ENCODE measurements at regions of chr7 and their contacts with region 1.

Region 1: GRCh38 chr7:371119-371778 is 81.3 kb downstream of the FOXL3 start:
- DNase-seq: peak; percentile 59 to 84
- H3K4me3 ChIP-seq: no peak overlapping the region
- H3K4me3 Mint-ChIP-seq: peak overlapping the region; percentile 16
- H3K27ac Mint-ChIP-seq: peak overlapping the region; percentile 99
- H3K4me1 ChIP-seq: peaks cover 72% of the 10 kb centered on the region
- H3K4me1 Mint-ChIP-seq: peaks cover 43% of the 10 kb centered on the region
- H3K27me3 ChIP-seq: no peaks in the 10 kb centered on the region
- H3K27me3 Mint-ChIP-seq: no peaks in the 10 kb centered on the region
- CTCF ChIP-seq: no peak

Region 2: DNA sequence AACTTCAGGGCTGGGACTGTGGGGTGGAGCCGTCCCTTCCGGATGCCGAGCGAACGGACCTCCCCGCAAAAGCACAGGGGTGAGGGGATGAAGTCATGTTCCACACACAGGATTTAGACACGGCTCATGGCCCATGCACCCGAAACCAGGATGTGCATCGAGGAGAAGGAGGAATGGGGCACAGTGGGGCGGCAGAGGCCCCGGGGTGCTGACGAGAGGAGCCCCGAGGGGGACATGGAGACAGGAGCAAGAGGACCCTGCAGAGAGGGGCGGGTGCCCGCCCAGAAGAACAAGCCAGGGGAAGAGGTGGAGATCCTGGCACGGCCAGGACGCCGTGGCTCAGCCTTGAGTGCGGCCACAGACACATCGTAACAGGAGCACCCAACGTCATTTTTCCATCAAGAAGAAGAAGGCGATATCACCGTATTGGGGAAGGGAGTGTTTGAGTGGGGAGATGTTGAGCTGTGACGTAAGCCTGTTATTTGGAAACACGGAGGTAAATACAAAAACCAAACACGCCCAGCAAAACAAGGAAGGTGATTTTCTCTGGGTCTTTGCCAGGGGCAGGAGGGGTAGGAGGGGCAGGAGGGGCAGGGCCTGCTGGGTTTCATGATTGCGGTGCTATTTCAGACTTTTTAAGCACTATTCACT is 106.6 kb before region 1 on chr7:
- CTCF ChIA-PET with region 1: no interaction called
- POLR2A ChIA-PET with region 1: no interaction called
- intact Hi-C with region 1: no loop called
- DNase-seq: peak in 1 of 2 experiments; percentile 17
- H3K4me3 ChIP-seq: no peak overlapping the region
- H3K4me3 Mint-ChIP-seq: no peak overlapping the region
- H3K27ac Mint-ChIP-seq: no peak overlapping the region
- H3K4me1 ChIP-seq: no peaks in the 10 kb centered on the region
- H3K4me1 Mint-ChIP-seq: peaks cover 6% of the 10 kb centered on the region
- H3K27me3 ChIP-seq: no peaks in the 10 kb centered on the region
- H3K27me3 Mint-ChIP-seq: no peaks in the 10 kb centered on the region
- CTCF ChIP-seq: no peak

Region 3: GRCh38 chr7:332646-333392 is 38.4 kb before region 1 on chr7:
- CTCF ChIA-PET with region 1: interaction called, 6 read pairs
- POLR2A ChIA-PET with region 1: interaction called, 8 read pairs
- intact Hi-C with region 1: loop called (anchors 1 kb)
- DNase-seq: peak; percentile 88 to 96
- H3K4me3 ChIP-seq: peak overlapping the region; percentile 46
- H3K4me3 Mint-ChIP-seq: peak overlapping the region; percentile 67
- H3K27ac Mint-ChIP-seq: peak overlapping the region; percentile 72
- H3K4me1 ChIP-seq: peaks cover 30% of the 10 kb centered on the region
- H3K4me1 Mint-ChIP-seq: peaks cover 35% of the 10 kb centered on the region
- H3K27me3 ChIP-seq: no peaks in the 10 kb centered on the region
- H3K27me3 Mint-ChIP-seq: no peaks in the 10 kb centered on the region
- CTCF ChIP-seq: peak; percentile 94 to 95

Region 4: GRCh38 chr7:341841-342638 is 29.2 kb before region 1 on chr7:
- CTCF ChIA-PET with region 1: interaction called, 11 read pairs
- POLR2A ChIA-PET with region 1: interaction called, 10 read pairs
- intact Hi-C with region 1: loop called (anchors 1 kb)
- DNase-seq: peak; percentile 83 to 89
- H3K4me3 ChIP-seq: no peak overlapping the region
- H3K4me3 Mint-ChIP-seq: peak overlapping the region; percentile 48
- H3K27ac Mint-ChIP-seq: peak overlapping the region; percentile 92
- H3K4me1 ChIP-seq: peaks cover 66% of the 10 kb centered on the region
- H3K4me1 Mint-ChIP-seq: peaks cover 52% of the 10 kb centered on the region
- H3K27me3 ChIP-seq: no peaks in the 10 kb centered on the region
- H3K27me3 Mint-ChIP-seq: no peaks in the 10 kb centered on the region
- CTCF ChIP-seq: no peak

Region 5: DNA sequence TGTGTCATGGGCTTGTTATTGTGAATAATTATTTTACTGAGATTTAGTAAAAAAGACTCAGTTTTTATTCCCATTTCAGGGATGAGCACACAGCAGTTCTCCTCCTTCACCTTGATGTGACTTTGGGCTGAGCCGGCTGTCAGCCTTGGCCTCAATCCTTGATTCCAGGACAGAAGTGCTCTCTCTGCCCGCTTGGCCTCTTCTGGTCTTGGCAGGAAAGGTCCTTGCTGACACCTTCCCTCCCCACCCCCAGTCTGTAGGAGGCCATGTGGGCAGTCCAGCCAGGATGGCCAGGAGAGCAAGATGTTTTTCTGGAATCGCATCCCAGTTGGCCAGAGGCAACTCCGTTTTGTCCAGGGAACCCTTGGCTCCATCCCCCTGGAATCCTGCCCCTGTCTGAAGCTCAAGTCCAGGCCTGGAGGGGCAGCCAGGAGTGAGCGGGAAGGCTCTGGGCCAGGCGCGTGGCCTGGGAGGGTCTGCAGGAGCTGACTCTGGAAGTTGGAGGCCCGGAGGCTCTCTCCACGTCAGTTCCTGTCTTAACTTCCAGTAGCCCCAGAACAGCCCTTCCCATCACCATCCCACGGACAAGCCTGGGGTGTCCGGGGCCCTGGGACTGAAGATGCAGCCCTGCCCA is 47.5 kb after region 1 on chr7:
- CTCF ChIA-PET with region 1: no interaction called
- POLR2A ChIA-PET with region 1: no interaction called
- intact Hi-C with region 1: no loop called
- DNase-seq: peak in 1 of 2 experiments; percentile 21
- H3K4me3 ChIP-seq: no peak overlapping the region
- H3K4me3 Mint-ChIP-seq: no peak overlapping the region
- H3K27ac Mint-ChIP-seq: no peak overlapping the region
- H3K4me1 ChIP-seq: no peaks in the 10 kb centered on the region
- H3K4me1 Mint-ChIP-seq: no peaks in the 10 kb centered on the region
- H3K27me3 ChIP-seq: no peaks in the 10 kb centered on the region
- H3K27me3 Mint-ChIP-seq: no peaks in the 10 kb centered on the region
- CTCF ChIP-seq: no peak

Region 6: DNA sequence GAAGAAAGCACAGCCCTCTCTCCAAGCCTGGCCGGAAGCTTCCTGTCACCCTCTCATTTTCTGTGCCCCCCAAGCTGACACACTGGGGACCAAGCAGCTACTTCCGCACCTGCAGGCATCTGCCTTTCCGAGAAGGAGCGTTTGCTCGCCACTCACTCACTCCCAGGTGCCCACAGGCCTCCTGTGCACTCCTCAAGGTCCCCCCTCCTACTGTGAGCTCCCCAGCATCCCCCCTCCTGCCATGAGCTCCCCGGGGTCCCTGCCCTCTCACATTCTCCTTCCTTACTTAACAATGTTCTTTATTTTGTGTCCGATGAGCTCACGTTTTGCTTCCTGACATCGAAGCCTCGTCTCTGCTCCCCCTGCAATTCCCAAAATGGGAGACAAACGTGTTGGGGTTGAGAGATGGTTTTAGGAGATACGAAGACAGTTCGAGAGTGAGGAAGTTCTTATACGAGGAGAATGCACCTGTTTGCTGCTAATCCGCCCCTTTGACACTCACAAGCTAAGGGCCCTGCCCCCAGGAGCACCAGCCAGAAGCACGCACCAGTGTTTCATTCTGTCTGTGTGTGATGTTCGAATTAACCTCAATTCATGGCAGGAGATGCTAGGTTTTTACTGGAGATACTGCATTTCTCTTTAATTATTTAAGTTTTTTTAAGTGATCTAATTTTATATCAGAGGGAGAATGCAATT is 78.2 kb after region 1 on chr7:
- CTCF ChIA-PET with region 1: no interaction called
- POLR2A ChIA-PET with region 1: no interaction called
- intact Hi-C with region 1: no loop called
- DNase-seq: no peak
- H3K4me3 ChIP-seq: no peak overlapping the region
- H3K4me3 Mint-ChIP-seq: no peak overlapping the region
- H3K27ac Mint-ChIP-seq: no peak overlapping the region
- H3K4me1 ChIP-seq: peaks cover 14% of the 10 kb centered on the region; the same call in 1 of the 2 replicates
- H3K4me1 Mint-ChIP-seq: peaks cover 7% of the 10 kb centered on the region
- H3K27me3 ChIP-seq: no peaks in the 10 kb centered on the region
- H3K27me3 Mint-ChIP-seq: no peaks in the 10 kb centered on the region
- CTCF ChIP-seq: no peak